Mammary epithelial cell (primary cell): ENCODE measurements at regions of chr9 and their contacts with region 1.

Region 1: GRCh38 chr9:130590305-130590704 is 10.9 kb downstream of the FUBP3 start:
- DNase-seq: no peak
- H3K4me3 ChIP-seq: no peak overlapping the region
- H3K27ac ChIP-seq: no peak overlapping the region
- H3K4me1 ChIP-seq: no peaks in the 10 kb centered on the region
- H3K27me3 ChIP-seq: no peaks in the 10 kb centered on the region
- CTCF ChIP-seq: no peak

Region 2: GRCh38 chr9:130526854-130527650 is 63.3 kb before region 1 on chr9:
- CTCF ChIA-PET with region 1: no interaction called
- dilution Hi-C with region 1: loop called (anchors 5 kb)
- in situ Hi-C with region 1: loop called in 1 of 2 experiments (anchors 10 kb)
- intact Hi-C with region 1: no loop called
- DNase-seq: no peak
- H3K4me3 ChIP-seq: no peak overlapping the region
- H3K27ac ChIP-seq: no peak overlapping the region
- H3K4me1 ChIP-seq: no peaks in the 10 kb centered on the region
- H3K27me3 ChIP-seq: no peaks in the 10 kb centered on the region
- CTCF ChIP-seq: no peak

Region 3: GRCh38 chr9:130535818-130536561 is 54.3 kb before region 1 on chr9:
- CTCF ChIA-PET with region 1: no interaction called
- dilution Hi-C with region 1: no loop called
- in situ Hi-C with region 1: loop called in 1 of 2 experiments (anchors 10 kb)
- intact Hi-C with region 1: no loop called
- DNase-seq: no peak
- H3K4me3 ChIP-seq: no peak overlapping the region
- H3K27ac ChIP-seq: no peak overlapping the region
- H3K4me1 ChIP-seq: peaks cover 20% of the 10 kb centered on the region
- H3K27me3 ChIP-seq: no peaks in the 10 kb centered on the region
- CTCF ChIP-seq: no peak